ENCODE measurements at regions of chr17 and their contacts with region 1.

Region 1: DNA sequence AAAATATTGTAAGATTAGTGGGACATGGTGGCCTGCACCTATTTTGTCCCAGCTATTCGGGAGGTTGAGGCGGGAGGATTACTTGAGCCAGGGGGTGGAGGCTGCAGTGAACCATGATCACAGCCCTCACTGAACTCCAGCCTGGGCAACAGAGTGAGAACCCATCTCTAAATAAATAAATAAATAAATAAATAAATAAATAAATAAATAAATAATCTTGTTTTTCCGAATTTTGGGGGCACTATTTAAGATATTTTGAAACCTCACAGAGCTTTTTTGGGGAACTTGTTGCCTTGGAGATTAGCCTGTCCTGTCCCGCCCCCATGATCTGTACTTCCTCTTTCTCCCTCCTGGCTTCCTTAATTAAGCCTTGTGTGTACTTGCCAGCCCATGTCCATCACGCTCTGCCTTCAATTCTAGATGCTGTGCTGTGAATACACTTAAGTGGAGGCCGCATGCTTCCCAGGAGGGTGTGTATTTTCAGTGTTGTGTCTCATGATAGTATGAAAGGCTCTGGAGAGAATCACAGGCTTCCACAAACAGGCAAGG is 4.4 kb downstream of the LGALS9 start:
- DNase-seq: no peak
- H3K4me3 ChIP-seq: no peak overlapping the region
- H3K4me3 Mint-ChIP-seq: no peak overlapping the region
- H3K27ac Mint-ChIP-seq: no peak overlapping the region
- H3K4me1 ChIP-seq: peaks cover 5% of the 10 kb centered on the region
- H3K4me1 Mint-ChIP-seq: peaks cover 7% of the 10 kb centered on the region
- H3K27me3 ChIP-seq: no peaks in the 10 kb centered on the region
- H3K27me3 Mint-ChIP-seq: no peaks in the 10 kb centered on the region
- CTCF ChIP-seq: no peak

Region 2: DNA sequence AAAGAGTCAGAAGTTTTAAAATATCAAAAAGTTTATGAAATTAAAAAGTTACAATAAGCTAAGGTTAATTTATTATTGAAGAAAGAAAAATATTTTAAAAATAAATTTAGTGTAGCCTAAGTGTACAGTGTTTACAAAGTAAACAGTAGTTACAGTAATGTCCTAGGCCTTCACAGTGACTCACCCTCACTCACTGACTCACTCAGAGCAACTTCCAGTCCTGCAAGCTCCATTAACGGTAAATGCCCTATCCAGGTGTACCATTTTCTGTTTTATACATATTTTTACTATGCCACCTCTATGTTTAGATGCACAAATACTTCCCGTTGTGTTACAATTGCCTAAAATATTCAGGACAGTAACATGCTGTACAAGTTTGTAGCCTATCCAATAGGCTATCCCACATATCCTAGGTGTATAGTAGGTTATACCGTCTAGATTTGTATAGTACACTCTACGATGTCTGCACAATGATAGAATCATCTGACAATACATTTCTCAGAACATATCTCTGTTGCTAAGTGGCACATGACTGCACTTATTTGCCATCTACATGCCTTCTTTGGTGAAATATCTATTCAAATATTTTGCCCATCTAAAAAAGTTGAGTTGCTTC is 408.6 kb before region 1 on chr17:
- CTCF ChIA-PET with region 1: no interaction called
- POLR2A ChIA-PET with region 1: no interaction called
- intact Hi-C with region 1: no loop called
- DNase-seq: no peak
- H3K4me3 ChIP-seq: no peak overlapping the region
- H3K4me3 Mint-ChIP-seq: no peak overlapping the region
- H3K27ac Mint-ChIP-seq: no peak overlapping the region
- H3K4me1 ChIP-seq: no peaks in the 10 kb centered on the region; the same call in 1 of the 2 replicates
- H3K4me1 Mint-ChIP-seq: no peaks in the 10 kb centered on the region
- H3K27me3 ChIP-seq: no peaks in the 10 kb centered on the region
- H3K27me3 Mint-ChIP-seq: no peaks in the 10 kb centered on the region
- CTCF ChIP-seq: no peak

Region 3: GRCh38 chr17:27381007-27381501 is 254.3 kb before region 1 on chr17:
- CTCF ChIA-PET with region 1: interaction called, 10 read pairs
- POLR2A ChIA-PET with region 1: no interaction called
- intact Hi-C with region 1: no loop called
- DNase-seq: peak; percentile 77 to 82
- H3K4me3 ChIP-seq: no peak overlapping the region
- H3K4me3 Mint-ChIP-seq: no peak overlapping the region
- H3K27ac Mint-ChIP-seq: no peak overlapping the region
- H3K4me1 ChIP-seq: 0 out of 2 replicates have a peak, but pooled peaks cover 3% of the 10 kb centered on the region
- H3K4me1 Mint-ChIP-seq: no peaks in the 10 kb centered on the region
- H3K27me3 ChIP-seq: no peaks in the 10 kb centered on the region
- H3K27me3 Mint-ChIP-seq: peaks cover 4% of the 10 kb centered on the region
- CTCF ChIP-seq: peak; percentile 93 to 94

Region 4: GRCh38 chr17:27622986-27623385 is 12.4 kb before region 1 on chr17:
- CTCF ChIA-PET with region 1: no interaction called
- POLR2A ChIA-PET with region 1: no interaction called
- intact Hi-C with region 1: no loop called
- DNase-seq: no peak
- H3K4me3 ChIP-seq: no peak overlapping the region
- H3K4me3 Mint-ChIP-seq: no peak overlapping the region
- H3K27ac Mint-ChIP-seq: no peak overlapping the region
- H3K4me1 ChIP-seq: no peaks in the 10 kb centered on the region
- H3K4me1 Mint-ChIP-seq: no peaks in the 10 kb centered on the region
- H3K27me3 ChIP-seq: no peaks in the 10 kb centered on the region
- H3K27me3 Mint-ChIP-seq: no peaks in the 10 kb centered on the region
- CTCF ChIP-seq: no peak

Region 5: DNA sequence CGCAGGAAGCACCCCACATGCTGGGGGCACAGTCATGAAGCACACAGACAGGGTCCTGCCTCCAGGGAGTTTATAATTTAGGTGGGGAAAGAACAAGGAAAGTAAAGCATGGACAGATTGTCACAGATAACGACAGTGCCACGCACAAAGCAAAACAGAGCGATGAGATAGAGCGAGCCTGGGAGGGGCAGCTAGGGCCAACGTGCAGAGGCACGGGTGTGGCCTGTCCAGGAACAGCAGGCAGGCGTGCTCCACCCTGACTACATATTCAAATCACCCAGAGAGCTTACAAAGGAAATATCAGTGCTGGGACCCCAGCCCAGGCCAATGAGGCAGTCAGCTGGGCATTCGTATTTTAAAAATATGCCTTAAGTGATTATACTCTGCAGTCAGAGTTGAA is 12.4 kb after region 1 on chr17:
- CTCF ChIA-PET with region 1: no interaction called
- POLR2A ChIA-PET with region 1: no interaction called
- intact Hi-C with region 1: no loop called
- DNase-seq: no peak
- H3K4me3 ChIP-seq: no peak overlapping the region
- H3K4me3 Mint-ChIP-seq: no peak overlapping the region
- H3K27ac Mint-ChIP-seq: no peak overlapping the region
- H3K4me1 ChIP-seq: no peaks in the 10 kb centered on the region
- H3K4me1 Mint-ChIP-seq: no peaks in the 10 kb centered on the region
- H3K27me3 ChIP-seq: no peaks in the 10 kb centered on the region
- H3K27me3 Mint-ChIP-seq: no peaks in the 10 kb centered on the region
- CTCF ChIP-seq: peak in 1 of 2 experiments; percentile 5

Region 6: DNA sequence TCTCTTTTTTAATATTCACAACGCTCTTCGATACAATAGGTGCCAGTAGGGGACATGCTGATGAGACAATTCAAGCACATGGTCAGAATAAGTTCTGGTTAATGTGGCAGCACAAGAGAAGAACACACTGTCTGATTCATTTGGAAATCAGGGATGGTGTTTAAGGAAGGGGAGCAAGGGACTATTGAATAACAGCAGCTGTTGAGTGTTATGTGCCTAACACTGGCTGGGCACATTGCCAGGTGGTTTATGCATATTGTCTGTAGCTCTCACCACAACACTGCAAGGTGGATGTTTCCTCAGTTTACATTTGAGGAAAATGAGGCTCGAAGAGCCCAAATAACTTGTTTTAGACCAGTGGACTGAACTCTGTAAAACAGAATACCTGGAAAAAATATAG is 213.6 kb after region 1 on chr17:
- CTCF ChIA-PET with region 1: no interaction called
- POLR2A ChIA-PET with region 1: no interaction called
- intact Hi-C with region 1: no loop called
- DNase-seq: no peak
- H3K4me3 ChIP-seq: no peak overlapping the region
- H3K4me3 Mint-ChIP-seq: no peak overlapping the region
- H3K27ac Mint-ChIP-seq: no peak overlapping the region
- H3K4me1 ChIP-seq: peaks cover 28% of the 10 kb centered on the region
- H3K4me1 Mint-ChIP-seq: peaks cover 18% of the 10 kb centered on the region
- H3K27me3 ChIP-seq: no peaks in the 10 kb centered on the region
- H3K27me3 Mint-ChIP-seq: no peaks in the 10 kb centered on the region
- CTCF ChIP-seq: no peak